ENCODE measurements at regions of chr10 and their contacts with region 1.

Region 1: DNA sequence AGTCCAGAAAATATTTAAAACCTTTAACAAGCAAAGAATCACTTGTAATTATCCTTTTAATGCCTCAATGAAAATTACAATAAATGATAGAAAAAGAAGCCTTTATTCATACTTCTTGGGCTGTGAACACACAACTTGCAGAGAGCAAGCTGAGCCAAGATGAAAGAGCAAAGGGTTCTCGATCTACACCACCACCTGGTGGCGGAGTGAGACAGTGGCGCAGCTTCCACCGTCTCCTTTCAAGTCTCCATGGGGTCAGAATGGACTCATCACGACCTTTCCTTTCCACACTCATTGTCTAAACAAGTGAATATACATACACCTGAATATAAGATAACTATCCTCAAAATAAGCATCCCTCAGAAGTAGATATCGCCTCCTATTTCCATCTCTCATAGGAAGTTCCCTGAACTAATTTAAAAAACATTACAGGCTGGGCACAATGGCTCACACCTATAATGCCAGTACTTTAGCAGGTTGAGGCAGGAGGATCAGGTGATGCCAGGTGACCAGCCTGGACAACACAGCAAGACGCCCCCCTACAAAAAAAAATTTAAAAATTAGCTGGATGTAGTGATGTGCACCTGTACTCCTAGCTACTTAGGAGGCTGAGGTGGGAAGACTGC is 40.7 kb downstream of the ATE1 start:
- DNase-seq: peak; percentile 77
- ATAC-seq: peak; percentile 80
- H3K4me3 Mint-ChIP-seq: no peak overlapping the region
- H3K27ac Mint-ChIP-seq: no peak overlapping the region
- H3K4me1 Mint-ChIP-seq: no peaks in the 10 kb centered on the region
- H3K27me3 Mint-ChIP-seq: no peaks in the 10 kb centered on the region

Region 2: GRCh38 chr10:120942806-120943413 is 944.2 kb before region 1 on chr10:
- CTCF ChIA-PET with region 1: interaction called, 4 read pairs
- POLR2A ChIA-PET with region 1: no interaction called
- intact Hi-C with region 1: loop called (anchors 1 to 5 kb)
- DNase-seq: peak; percentile 89
- ATAC-seq: peak; percentile 97
- H3K4me3 Mint-ChIP-seq: no peak overlapping the region
- H3K27ac Mint-ChIP-seq: no peak overlapping the region
- H3K4me1 Mint-ChIP-seq: peaks cover 5% of the 10 kb centered on the region
- H3K27me3 Mint-ChIP-seq: peaks cover 14% of the 10 kb centered on the region

Region 3: DNA sequence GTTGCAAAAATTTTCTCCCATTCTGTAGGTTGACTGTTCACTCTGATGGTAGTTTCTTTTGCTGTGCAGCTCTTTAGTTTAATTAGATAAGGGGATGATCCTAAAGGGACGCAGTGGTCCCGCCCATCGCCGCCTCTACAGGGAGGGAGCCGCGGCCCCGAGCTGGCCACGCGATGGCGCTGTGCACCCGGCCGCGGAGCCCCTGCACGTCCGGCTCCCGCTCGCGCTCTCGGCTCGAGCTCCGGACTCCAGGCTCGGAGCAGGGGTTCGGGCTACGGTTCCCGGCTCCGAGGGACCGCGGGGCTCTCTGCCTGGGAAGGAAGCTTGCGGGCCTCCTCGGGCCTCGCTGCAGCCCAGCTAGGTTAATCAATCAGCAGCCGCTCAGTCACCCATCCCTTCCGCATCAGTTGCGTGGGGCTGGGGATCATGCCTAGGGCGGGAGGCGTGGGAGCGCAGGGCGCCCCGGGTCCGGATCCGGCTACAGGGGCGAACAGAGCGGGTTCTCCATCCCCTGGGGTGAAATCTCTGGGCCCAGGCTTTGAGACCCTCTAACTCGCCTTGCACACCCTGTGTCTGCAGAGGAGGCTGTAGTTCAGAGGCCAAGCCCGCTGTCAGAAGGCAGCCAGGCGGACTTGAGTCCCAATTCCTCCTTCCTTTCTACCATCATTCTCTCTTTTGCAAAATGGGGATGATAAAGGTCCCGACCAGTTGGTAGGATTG is 938.1 kb before region 1 on chr10:
- CTCF ChIA-PET with region 1: interaction called, 10 read pairs
- POLR2A ChIA-PET with region 1: no interaction called
- intact Hi-C with region 1: loop called (anchors 1 to 5 kb)
- DNase-seq: peak; percentile 82
- ATAC-seq: peak; percentile 98
- H3K4me3 Mint-ChIP-seq: peak overlapping the region; percentile 12
- H3K27ac Mint-ChIP-seq: no peak overlapping the region
- H3K4me1 Mint-ChIP-seq: no peaks in the 10 kb centered on the region
- H3K27me3 Mint-ChIP-seq: peaks cover 32% of the 10 kb centered on the region

Region 4: DNA sequence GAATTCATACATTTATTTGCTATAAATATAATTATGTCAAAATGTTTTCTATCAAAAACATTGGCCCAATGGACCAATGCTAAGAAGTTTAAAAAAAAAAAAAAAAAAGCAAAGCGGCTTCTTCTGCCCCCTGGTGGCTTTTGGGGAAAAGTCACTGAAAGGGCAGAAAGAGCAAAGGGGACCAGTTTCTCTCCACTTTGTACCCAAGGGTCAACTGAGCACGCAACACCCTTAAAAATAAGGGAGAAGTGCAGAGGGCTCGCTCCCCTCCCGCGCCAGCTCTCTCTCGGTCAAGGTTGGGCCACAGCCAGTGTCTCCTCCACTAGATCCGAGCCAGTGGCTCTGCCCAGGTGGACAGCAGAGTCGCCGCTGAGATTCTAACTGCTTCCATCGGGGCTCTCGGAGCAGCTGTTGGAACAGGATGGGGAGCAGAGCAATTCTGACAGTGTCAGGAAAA is 152.5 kb before region 1 on chr10:
- CTCF ChIA-PET with region 1: interaction called, 3 read pairs
- POLR2A ChIA-PET with region 1: no interaction called
- intact Hi-C with region 1: loop called (anchors 5 to 10 kb)
- DNase-seq: peak; percentile 40
- ATAC-seq: no peak
- H3K4me3 Mint-ChIP-seq: no peak overlapping the region
- H3K27ac Mint-ChIP-seq: no peak overlapping the region
- H3K4me1 Mint-ChIP-seq: peaks cover 11% of the 10 kb centered on the region
- H3K27me3 Mint-ChIP-seq: peaks cover 41% of the 10 kb centered on the region

Region 5: GRCh38 chr10:121823993-121824463 is 63.1 kb before region 1 on chr10:
- CTCF ChIA-PET with region 1: interaction called, 21 read pairs
- POLR2A ChIA-PET with region 1: no interaction called
- intact Hi-C with region 1: loop called (anchors 1 kb)
- DNase-seq: no peak
- ATAC-seq: peak; percentile 46
- H3K4me3 Mint-ChIP-seq: no peak overlapping the region
- H3K27ac Mint-ChIP-seq: no peak overlapping the region
- H3K4me1 Mint-ChIP-seq: peaks cover 4% of the 10 kb centered on the region
- H3K27me3 Mint-ChIP-seq: no peaks in the 10 kb centered on the region